G401 (cell line): ENCODE measurements at regions of chr4 and their contacts with region 1.

Region 1: DNA sequence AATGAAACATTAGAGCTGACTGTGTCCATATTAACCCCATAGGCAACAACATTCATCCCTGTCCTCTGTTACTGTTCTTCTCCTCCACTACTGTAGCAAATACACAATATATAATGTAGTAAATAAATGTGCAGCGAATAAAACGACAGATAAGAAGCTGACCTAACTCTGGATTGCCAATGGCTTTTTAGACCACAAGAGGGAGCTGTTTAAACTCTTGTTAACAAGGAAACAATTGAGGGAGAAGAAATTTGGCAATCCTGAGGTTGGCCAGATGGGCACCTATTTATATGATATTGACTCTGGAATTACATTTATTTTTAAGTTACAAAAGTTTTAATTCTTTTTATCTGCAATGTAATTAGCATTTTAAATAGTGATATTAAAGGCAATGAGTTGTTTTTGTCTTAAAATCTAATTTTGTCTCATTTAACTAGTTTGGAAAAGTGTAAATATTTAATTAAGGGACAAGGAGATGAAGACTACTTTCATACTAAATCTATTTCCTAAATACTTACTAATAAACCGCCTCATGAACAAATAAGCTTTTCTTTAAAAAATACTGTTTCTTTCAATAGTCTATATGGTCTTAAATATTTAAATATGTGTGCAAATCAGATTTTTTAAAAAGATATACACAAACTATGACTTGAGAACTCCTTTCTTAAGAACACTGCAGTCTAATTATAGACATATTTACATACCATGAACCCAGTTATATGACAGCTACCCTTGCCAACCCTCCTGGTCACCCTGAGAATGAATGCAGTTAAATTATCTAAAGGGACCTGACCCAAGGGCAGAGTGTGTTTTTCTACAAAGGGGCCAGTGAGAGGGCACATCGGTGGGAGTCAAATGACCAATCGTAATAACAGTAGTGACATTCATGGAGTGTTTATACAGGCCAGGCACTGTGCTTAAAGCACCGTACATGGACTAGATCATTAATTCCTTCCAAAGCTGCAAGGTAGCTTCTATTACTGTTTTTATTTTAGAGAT is 52.9 kb upstream of the HPF1 start:
- DNase-seq: peak; percentile 85

Region 2: GRCh38 chr4:169727616-169728015 is 83.0 kb before region 1 on chr4:
- in situ Hi-C with region 1: no loop called
- DNase-seq: no peak

Region 3: GRCh38 chr4:169765835-169766234 is 44.8 kb before region 1 on chr4:
- in situ Hi-C with region 1: no loop called
- DNase-seq: no peak

Region 4: DNA sequence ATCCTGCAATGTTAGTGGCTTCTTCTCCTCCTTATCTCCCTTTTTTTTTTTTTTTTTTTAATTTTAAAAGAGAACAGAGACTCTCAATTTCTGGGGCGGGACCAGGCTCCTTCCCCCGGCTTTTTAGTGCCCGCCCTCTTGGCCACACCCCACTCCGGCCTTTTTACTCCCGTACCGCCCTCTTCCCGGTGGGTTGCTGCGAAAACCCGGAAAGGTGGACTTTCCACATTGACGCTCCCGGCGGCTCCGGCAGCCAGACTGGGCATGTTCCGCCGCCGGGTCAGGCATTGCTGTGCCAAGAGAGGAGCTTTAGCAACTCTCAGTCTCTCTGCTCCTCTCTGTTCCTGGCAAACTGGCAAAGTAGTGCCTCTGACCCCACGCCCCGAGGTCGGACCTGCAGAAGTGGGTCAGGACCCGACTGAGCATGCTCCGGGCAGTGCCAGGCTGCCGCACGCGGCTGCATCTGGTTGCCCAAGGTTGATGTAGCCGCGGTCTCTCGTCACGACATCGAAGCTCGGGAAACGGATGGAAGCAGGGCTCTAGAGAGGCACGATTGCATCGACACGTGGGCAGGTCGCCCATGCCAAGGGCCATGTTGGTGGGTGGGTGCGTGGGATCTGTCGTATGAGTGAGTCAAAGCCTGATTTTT is 216.7 kb after region 1 on chr4:
- in situ Hi-C with region 1: loop called (anchors 25 kb)
- DNase-seq: peak; percentile 89